Activated T-helper 2 cell treated with anti-CD3 and anti-CD28 coated beads, Interferon-gamma antibody, Interleukin-2, Interleukin-4, amounts not matched to agents 10 μg/mL and 5 μg/mL and 100 μg/mL, durations not matched to agents 14 hours and 24 hours and 36 hours (primary cell): ENCODE measurements at regions of chr11 and their contacts with region 1.

Region 1: GRCh38 chr11:86068951-86069407 is at the start of gene PICALM:
- DNase-seq: peak; percentile 97
- H3K4me3 Mint-ChIP-seq: peak within 1 kb of the TSS; percentile 95
- H3K27ac Mint-ChIP-seq: peak within 1 kb of the TSS; percentile 88
- H3K4me1 Mint-ChIP-seq: peaks cover 30% of the 10 kb centered on the region
- H3K27me3 Mint-ChIP-seq: peaks cover 2% of the 10 kb centered on the region
- total RNA-seq, gene PICALM: 193 and 213 TPM in 2 replicates

Region 2: DNA sequence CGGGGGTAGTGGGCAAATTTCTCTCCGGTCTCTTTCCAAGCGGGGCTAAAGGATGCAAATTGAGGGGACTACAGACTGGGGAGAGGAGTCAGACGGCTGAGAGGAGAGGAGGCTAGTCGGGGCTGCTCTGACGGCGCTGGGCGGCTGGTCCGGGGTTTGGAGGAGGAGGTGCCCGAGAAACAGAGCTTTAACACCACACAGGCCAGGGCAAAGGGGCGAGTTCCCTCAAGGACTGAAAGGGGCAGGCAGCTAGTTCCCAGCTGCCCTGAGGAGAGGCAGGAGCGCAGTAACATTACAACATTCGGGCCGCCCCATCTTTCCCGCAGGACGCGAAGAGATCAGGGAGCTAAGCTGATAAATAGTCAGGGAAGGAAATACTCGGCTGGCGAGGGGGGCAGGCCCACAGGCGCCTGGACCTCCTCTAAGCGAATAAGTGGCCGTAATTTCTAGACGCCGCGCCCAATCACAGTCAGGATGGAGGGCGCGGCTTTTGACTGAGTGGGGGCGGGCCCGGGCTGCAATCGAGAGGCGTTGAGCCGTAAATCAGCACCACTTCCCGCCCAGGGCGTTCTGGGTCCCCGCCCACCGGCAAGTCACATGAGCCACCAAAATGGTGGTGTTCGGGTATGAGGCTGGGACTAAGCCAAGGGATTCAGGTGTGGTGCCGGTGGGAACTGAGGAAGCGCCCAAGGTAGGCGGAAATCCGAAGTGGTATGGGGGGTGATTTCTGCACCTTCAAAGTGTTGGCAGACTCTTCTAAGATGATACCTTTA is 440.8 kb before region 1 on chr11 and contains the start of gene TMEM126B:
- intact Hi-C with region 1: loop called (anchors 2 kb)
- DNase-seq: peak; percentile 95
- H3K4me3 Mint-ChIP-seq: peak within 1 kb of the TSS; percentile 89
- H3K27ac Mint-ChIP-seq: peak within 1 kb of the TSS; percentile 88
- H3K4me1 Mint-ChIP-seq: peaks cover 38% of the 10 kb centered on the region
- H3K27me3 Mint-ChIP-seq: peaks cover 2% of the 10 kb centered on the region
- total RNA-seq, gene TMEM126B: 63.8 and 66.5 TPM in 2 replicates

Region 3: DNA sequence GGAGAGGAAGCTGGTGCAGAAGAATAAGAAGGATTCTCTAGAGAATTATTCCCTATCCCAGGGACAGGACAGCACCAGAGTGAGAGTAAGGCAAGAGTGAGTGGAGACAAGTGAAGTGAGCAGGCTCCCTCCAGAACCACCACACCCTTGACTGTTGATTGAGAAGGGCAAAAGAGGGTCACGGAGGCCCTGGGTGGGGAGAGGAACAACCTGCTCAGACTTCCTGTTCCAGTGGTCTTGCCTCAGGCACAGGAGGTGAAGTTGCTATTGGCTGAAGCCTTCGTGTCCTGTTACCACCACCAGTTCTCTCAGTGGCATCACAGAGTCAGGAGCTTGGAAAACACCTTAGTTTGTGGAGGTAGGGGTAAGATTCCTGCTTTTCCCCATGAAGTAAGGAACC is 331.2 kb before region 1 on chr11:
- intact Hi-C with region 1: no loop called
- DNase-seq: no peak
- H3K4me3 Mint-ChIP-seq: no peak overlapping the region
- H3K27ac Mint-ChIP-seq: no peak overlapping the region
- H3K4me1 Mint-ChIP-seq: peaks cover 27% of the 10 kb centered on the region
- H3K27me3 Mint-ChIP-seq: no peaks in the 10 kb centered on the region

Region 4: DNA sequence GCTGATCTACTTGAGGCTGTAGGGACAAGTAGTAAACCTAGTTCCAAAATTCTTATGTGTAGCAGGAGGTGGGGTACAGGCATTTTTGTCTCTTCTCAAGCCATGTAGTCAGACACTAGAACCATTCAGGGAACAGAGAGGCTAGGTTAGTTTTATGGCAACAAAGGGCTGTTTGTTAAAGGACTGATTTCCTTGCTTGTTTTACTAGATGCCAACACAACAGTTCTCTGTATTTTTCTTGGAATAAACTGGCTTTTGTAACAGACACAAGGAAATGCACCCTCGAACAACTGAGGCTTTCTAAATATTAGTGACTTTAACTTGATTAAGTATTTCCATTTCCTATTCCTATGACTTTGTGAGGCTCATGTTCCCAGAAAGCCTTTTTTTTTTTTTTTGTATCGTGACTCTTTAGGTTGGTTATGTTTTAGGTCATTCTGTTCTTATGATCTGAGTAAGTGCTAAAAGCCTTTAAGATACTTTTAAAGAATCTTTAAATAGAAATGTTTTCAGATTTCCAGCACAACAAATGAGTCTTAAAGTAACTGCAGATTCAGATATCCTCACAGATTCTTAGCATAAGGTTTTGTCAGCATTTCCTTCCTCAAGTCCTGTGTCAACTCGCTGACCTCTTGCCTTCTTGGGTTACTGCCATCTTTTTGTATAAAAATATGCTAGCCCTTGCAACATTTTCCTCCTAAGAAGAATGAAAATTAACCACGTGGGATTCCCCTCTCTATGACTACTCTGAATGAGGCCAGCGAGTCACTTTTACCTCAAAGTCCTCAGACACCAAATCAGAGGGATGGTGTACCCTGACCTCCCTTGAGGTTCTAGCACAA is 121.3 kb before region 1 on chr11:
- intact Hi-C with region 1: loop called (anchors 5 kb)
- DNase-seq: no peak
- H3K4me3 Mint-ChIP-seq: peak overlapping the region; percentile 15
- H3K27ac Mint-ChIP-seq: peak overlapping the region; percentile 75
- H3K4me1 Mint-ChIP-seq: peaks cover 35% of the 10 kb centered on the region
- H3K27me3 Mint-ChIP-seq: no peaks in the 10 kb centered on the region

Region 5: DNA sequence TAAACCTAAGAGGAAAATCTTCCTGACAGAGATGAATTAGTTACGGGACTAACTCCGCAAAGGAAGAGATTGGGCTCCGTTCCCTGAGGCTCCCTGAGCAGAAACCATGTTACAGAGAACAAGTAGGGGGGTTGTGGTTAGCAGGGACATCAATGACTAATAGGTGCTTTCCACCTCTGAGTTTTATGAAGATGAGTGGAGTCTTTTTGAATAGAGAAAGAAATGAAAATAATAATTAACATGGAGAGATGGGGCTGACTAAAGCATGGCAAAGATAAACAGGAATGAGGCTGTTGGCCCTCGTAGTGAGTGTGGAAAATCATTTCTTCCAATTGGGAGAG is 47.4 kb after region 1 on chr11:
- intact Hi-C with region 1: loop called (anchors 1 kb)
- DNase-seq: no peak
- H3K4me3 Mint-ChIP-seq: peak overlapping the region; percentile 22
- H3K27ac Mint-ChIP-seq: peak overlapping the region; percentile 83
- H3K4me1 Mint-ChIP-seq: peaks cover 42% of the 10 kb centered on the region
- H3K27me3 Mint-ChIP-seq: no peaks in the 10 kb centered on the region

Region 6: GRCh38 chr11:86182976-86183584 is 114.1 kb after region 1 on chr11:
- intact Hi-C with region 1: loop called (anchors 2 kb)
- DNase-seq: peak; percentile 48
- H3K4me3 Mint-ChIP-seq: no peak overlapping the region
- H3K27ac Mint-ChIP-seq: no peak overlapping the region
- H3K4me1 Mint-ChIP-seq: peaks cover 26% of the 10 kb centered on the region
- H3K27me3 Mint-ChIP-seq: no peaks in the 10 kb centered on the region